H1 (cell line): ENCODE measurements at regions of chrX and their contacts with region 1.

Region 1: GRCh38 chrX:19535476-19535875 is 20.2 kb upstream of the MAP3K15 start:
- DNase-seq: no peak
- H3K4me3 ChIP-seq: no peak overlapping the region
- H3K27ac ChIP-seq: no peak overlapping the region
- H3K4me1 ChIP-seq: no peaks in the 10 kb centered on the region
- H3K27me3 ChIP-seq: no peaks in the 10 kb centered on the region
- CTCF ChIP-seq: peak in 2 of 3 experiments; percentile 18 to 39; a peak in 3 of 4 replicates
- EP300 ChIP-seq: no peak
- POLR2A ChIP-seq: no peak
- RAD21 ChIP-seq: peak; percentile 46 to 59

Region 2: GRCh38 chrX:19372170-19372546 is 163.3 kb before region 1 on chrX:
- CTCF ChIA-PET with region 1: interaction called, 10 read pairs
- POLR2A ChIA-PET with region 1: no interaction called
- DNase-seq: peak in 1 of 2 experiments; percentile 74
- H3K4me3 ChIP-seq: peak overlapping the region; percentile 58 to 71 (median 60); a peak in 7 of 8 replicates
- H3K27ac ChIP-seq: no peak overlapping the region
- H3K4me1 ChIP-seq: 0 out of 7 replicates have a peak, but pooled peaks cover 0 to 4% (median 0%) of the 10 kb centered on the region in 4 experiments
- H3K27me3 ChIP-seq: peaks cover 0 to 5% (median 3%) of the 10 kb centered on the region in 4 experiments; a peak in 3 of 7 replicates
- CTCF ChIP-seq: peak; percentile 60 to 65 (median 65)
- EP300 ChIP-seq: no peak
- POLR2A ChIP-seq: no peak
- RAD21 ChIP-seq: peak; percentile 81 to 84

Region 3: GRCh38 chrX:19382555-19383145 is 152.8 kb before region 1 on chrX:
- CTCF ChIA-PET with region 1: interaction called, 11 read pairs
- POLR2A ChIA-PET with region 1: no interaction called
- DNase-seq: peak in 1 of 2 experiments; percentile 77
- H3K4me3 ChIP-seq: no peak overlapping the region
- H3K27ac ChIP-seq: no peak overlapping the region
- H3K4me1 ChIP-seq: no peaks in the 10 kb centered on the region; a peak in 1 of 7 replicates
- H3K27me3 ChIP-seq: no peaks in the 10 kb centered on the region
- CTCF ChIP-seq: peak; percentile 72 to 81 (median 77)
- EP300 ChIP-seq: no peak
- POLR2A ChIP-seq: no peak
- RAD21 ChIP-seq: peak; percentile 60 to 67